ENCODE measurements at regions of chr10 and their contacts with region 1.

Region 1: GRCh38 chr10:35195361-35196306 is 69.0 kb downstream of the CREM start:
- DNase-seq: peak; percentile 83
- ATAC-seq: peak; percentile 96
- H3K4me3 ChIP-seq: peak overlapping the region; percentile 66
- H3K27ac ChIP-seq: peak overlapping the region; percentile 82
- H3K4me1 ChIP-seq: peaks cover 8% of the 10 kb centered on the region; the same call in 1 of the 2 replicates
- H3K27me3 ChIP-seq: no peaks in the 10 kb centered on the region
- CTCF ChIP-seq: peak; percentile 82 to 86 (median 86)
- EP300 ChIP-seq: peak; percentile 78 to 97; a peak in 3 of 4 replicates
- POLR2A ChIP-seq: peak; percentile 53
- RAD21 ChIP-seq: peak; percentile 77

Region 2: GRCh38 chr10:35119378-35119777 is 76.3 kb before region 1 on chr10:
- CTCF ChIA-PET with region 1: interaction called, 100 read pairs
- POLR2A ChIA-PET with region 1: interaction called, 7 read pairs
- RAD21 ChIA-PET with region 1: interaction called, 44 read pairs
- SMC1A ChIA-PET with region 1: interaction called, 213 read pairs
- in situ Hi-C with region 1: no loop called
- intact Hi-C with region 1: no loop called
- DNase-seq: no peak
- ATAC-seq: no peak
- H3K4me3 ChIP-seq: no peak overlapping the region
- H3K27ac ChIP-seq: no peak overlapping the region
- H3K4me1 ChIP-seq: no peaks in the 10 kb centered on the region
- H3K27me3 ChIP-seq: no peaks in the 10 kb centered on the region
- CTCF ChIP-seq: no peak
- EP300 ChIP-seq: no peak
- POLR2A ChIP-seq: no peak
- RAD21 ChIP-seq: no peak

Region 3: GRCh38 chr10:35136263-35136815 is 59.3 kb before region 1 on chr10:
- CTCF ChIA-PET with region 1: interaction called, 185 read pairs
- POLR2A ChIA-PET with region 1: interaction called, 29 read pairs
- RAD21 ChIA-PET with region 1: interaction called, 201 read pairs
- SMC1A ChIA-PET with region 1: interaction called, 33 read pairs
- in situ Hi-C with region 1: no loop called
- intact Hi-C with region 1: loop called (anchors 1 kb)
- DNase-seq: peak; percentile 66
- ATAC-seq: peak; percentile 83
- H3K4me3 ChIP-seq: peak overlapping the region; percentile 18; the same call in 1 of the 2 replicates
- H3K27ac ChIP-seq: peak overlapping the region; percentile 83
- H3K4me1 ChIP-seq: peaks cover 28% of the 10 kb centered on the region
- H3K27me3 ChIP-seq: no peaks in the 10 kb centered on the region
- CTCF ChIP-seq: no peak
- EP300 ChIP-seq: peak; percentile 39 to 83; a peak in 2 of 4 replicates
- POLR2A ChIP-seq: no peak
- RAD21 ChIP-seq: no peak

Region 4: GRCh38 chr10:35172574-35172973 is 23.1 kb before region 1 on chr10:
- CTCF ChIA-PET with region 1: interaction called, 18 read pairs
- POLR2A ChIA-PET with region 1: interaction called, 12 read pairs
- RAD21 ChIA-PET with region 1: interaction called, 5 read pairs
- SMC1A ChIA-PET with region 1: interaction called, 10 read pairs
- in situ Hi-C with region 1: no loop called
- intact Hi-C with region 1: no loop called
- DNase-seq: no peak
- ATAC-seq: no peak
- H3K4me3 ChIP-seq: no peak overlapping the region
- H3K27ac ChIP-seq: no peak overlapping the region
- H3K4me1 ChIP-seq: no peaks in the 10 kb centered on the region
- H3K27me3 ChIP-seq: no peaks in the 10 kb centered on the region
- CTCF ChIP-seq: no peak
- EP300 ChIP-seq: no peak
- POLR2A ChIP-seq: no peak
- RAD21 ChIP-seq: no peak

Region 5: DNA sequence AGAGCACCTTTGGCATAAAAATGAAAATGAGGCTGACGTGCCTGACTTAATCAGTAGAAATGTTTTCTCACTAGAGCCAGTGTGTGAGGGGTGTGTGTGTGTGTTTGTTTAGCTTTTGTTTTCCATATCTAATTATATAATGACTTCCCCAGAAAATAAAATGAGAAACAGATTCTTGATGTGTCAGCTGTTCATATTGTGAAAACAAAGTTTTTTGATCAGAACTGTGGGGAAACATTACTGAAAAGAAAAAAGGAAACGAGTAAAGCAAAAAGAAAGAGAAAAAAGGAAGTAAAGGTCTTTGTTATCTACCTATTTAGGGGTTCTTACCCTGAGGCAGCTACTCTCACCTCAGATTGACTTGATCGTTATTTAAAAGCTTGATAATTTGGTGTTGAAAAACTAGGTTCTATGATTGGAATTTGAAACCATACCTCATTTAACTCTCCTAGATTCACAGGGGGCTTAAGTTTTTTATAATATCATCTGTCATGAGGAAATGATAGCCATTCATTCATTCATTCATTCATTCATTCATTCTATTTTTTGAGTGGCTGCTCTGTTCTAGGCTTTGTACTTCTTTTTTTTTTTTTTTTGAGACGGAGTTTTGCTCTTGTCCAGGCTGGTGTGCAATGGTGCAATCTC is 11.0 kb before region 1 on chr10:
- CTCF ChIA-PET with region 1: interaction called, 54 read pairs
- POLR2A ChIA-PET with region 1: interaction called, 4 read pairs
- RAD21 ChIA-PET with region 1: interaction called, 57 read pairs
- SMC1A ChIA-PET with region 1: interaction called, 48 read pairs
- in situ Hi-C with region 1: no loop called
- intact Hi-C with region 1: no loop called
- DNase-seq: no peak
- ATAC-seq: peak; percentile 74
- H3K4me3 ChIP-seq: no peak overlapping the region; the same call in 1 of the 2 replicates
- H3K27ac ChIP-seq: peak overlapping the region; percentile 74
- H3K4me1 ChIP-seq: peaks cover 22% of the 10 kb centered on the region
- H3K27me3 ChIP-seq: no peaks in the 10 kb centered on the region
- CTCF ChIP-seq: no peak
- EP300 ChIP-seq: peak in 1 of 2 experiments; percentile 51; a peak in 1 of 4 replicates
- POLR2A ChIP-seq: no peak
- RAD21 ChIP-seq: no peak

Region 6: DNA sequence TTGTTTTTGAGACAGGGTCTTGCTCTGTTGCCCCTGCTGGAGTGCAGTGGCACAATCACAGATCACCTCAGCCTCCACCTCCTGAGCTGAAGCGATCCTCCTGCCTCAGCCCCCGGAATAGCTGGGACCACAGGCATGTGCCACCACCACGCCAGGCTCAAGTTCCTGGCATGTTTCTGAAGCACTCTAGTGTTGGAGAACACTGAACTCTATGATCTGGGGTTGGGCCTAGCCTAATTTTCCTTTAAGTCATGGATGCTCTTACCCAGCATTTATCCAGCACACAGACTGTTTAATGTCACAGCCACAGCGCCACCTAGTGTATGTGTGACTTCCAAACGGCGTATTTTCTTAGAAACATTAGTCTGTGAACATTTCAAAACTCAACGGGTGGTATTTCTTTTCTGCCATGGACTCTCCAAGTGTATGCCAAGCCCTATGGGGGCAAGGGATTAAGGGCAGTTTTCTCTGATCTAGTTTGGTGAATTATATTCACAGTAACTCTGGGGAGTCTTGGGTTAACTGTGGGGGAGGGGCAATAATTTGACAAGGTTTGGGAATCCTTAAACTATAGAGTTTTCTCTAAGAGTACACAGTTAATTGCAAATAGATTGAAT is 22.8 kb after region 1 on chr10:
- CTCF ChIA-PET with region 1: interaction called, 119 read pairs
- POLR2A ChIA-PET with region 1: interaction called, 8 read pairs
- RAD21 ChIA-PET with region 1: interaction called, 29 read pairs
- SMC1A ChIA-PET with region 1: interaction called, 102 read pairs
- in situ Hi-C with region 1: no loop called
- intact Hi-C with region 1: loop called (anchors 2 kb)
- DNase-seq: peak; percentile 59
- ATAC-seq: peak; percentile 85
- H3K4me3 ChIP-seq: no peak overlapping the region
- H3K27ac ChIP-seq: no peak overlapping the region
- H3K4me1 ChIP-seq: peaks cover 12% of the 10 kb centered on the region
- H3K27me3 ChIP-seq: no peaks in the 10 kb centered on the region
- CTCF ChIP-seq: peak; percentile 64 to 86 (median 79); a peak in 5 of 6 replicates
- EP300 ChIP-seq: no peak
- POLR2A ChIP-seq: no peak
- RAD21 ChIP-seq: peak; percentile 90

Region 7: GRCh38 chr10:35276889-35277288 is 81.3 kb after region 1 on chr10:
- CTCF ChIA-PET with region 1: no interaction called
- POLR2A ChIA-PET with region 1: no interaction called
- RAD21 ChIA-PET with region 1: no interaction called
- SMC1A ChIA-PET with region 1: no interaction called
- in situ Hi-C with region 1: no loop called
- intact Hi-C with region 1: no loop called
- DNase-seq: no peak
- ATAC-seq: no peak
- H3K4me3 ChIP-seq: no peak overlapping the region
- H3K27ac ChIP-seq: no peak overlapping the region
- H3K4me1 ChIP-seq: no peaks in the 10 kb centered on the region
- H3K27me3 ChIP-seq: no peaks in the 10 kb centered on the region
- CTCF ChIP-seq: no peak
- EP300 ChIP-seq: no peak
- POLR2A ChIP-seq: no peak
- RAD21 ChIP-seq: no peak